Activated CD4-positive, alpha-beta memory T cell treated with anti-CD3 and anti-CD28 coated beads for 36 hours (primary cell): ENCODE measurements at regions of chr6 and their contacts with region 1.

Region 1: GRCh38 chr6:150238336-150238741 is 95.5 kb downstream of the PPP1R14C start:
- DNase-seq: no peak
- H3K4me3 Mint-ChIP-seq: no peak overlapping the region
- H3K27ac Mint-ChIP-seq: no peak overlapping the region
- H3K4me1 Mint-ChIP-seq: peaks cover 36% of the 10 kb centered on the region
- H3K27me3 Mint-ChIP-seq: peaks cover 6% of the 10 kb centered on the region

Region 2: GRCh38 chr6:150256618-150257272 is 18.4 kb after region 1 on chr6:
- CTCF ChIA-PET with region 1: no interaction called
- POLR2A ChIA-PET with region 1: no interaction called
- intact Hi-C with region 1: loop called (anchors 1 kb)
- DNase-seq: no peak
- H3K4me3 Mint-ChIP-seq: no peak overlapping the region
- H3K27ac Mint-ChIP-seq: no peak overlapping the region
- H3K4me1 Mint-ChIP-seq: peaks cover 38% of the 10 kb centered on the region
- H3K27me3 Mint-ChIP-seq: peaks cover 29% of the 10 kb centered on the region

Region 3: GRCh38 chr6:150293423-150294173 is 55.3 kb after region 1 on chr6:
- CTCF ChIA-PET with region 1: no interaction called
- POLR2A ChIA-PET with region 1: no interaction called
- intact Hi-C with region 1: no loop called
- DNase-seq: no peak
- H3K4me3 Mint-ChIP-seq: no peak overlapping the region
- H3K27ac Mint-ChIP-seq: no peak overlapping the region
- H3K4me1 Mint-ChIP-seq: no peaks in the 10 kb centered on the region
- H3K27me3 Mint-ChIP-seq: peaks cover 10% of the 10 kb centered on the region